PC-9 (cell line): ENCODE measurements at regions of chr15 and their contacts with region 1.

Region 1: GRCh38 chr15:32994810-32995424 is 199.6 kb downstream of the FMN1 start:
- DNase-seq: no peak
- H3K4me3 ChIP-seq: no peak overlapping the region
- H3K27ac ChIP-seq: no peak overlapping the region
- H3K4me1 ChIP-seq: no peaks in the 10 kb centered on the region
- H3K27me3 ChIP-seq: no peaks in the 10 kb centered on the region
- CTCF ChIP-seq: peak; percentile 75

Region 2: GRCh38 chr15:32651229-32651837 is 343.6 kb before region 1 on chr15:
- CTCF ChIA-PET with region 1: interaction called, 3 read pairs
- POLR2A ChIA-PET with region 1: no interaction called
- intact Hi-C with region 1: loop called (anchors 1 kb)
- DNase-seq: peak in 1 of 2 experiments; percentile 68
- H3K4me3 ChIP-seq: no peak overlapping the region
- H3K27ac ChIP-seq: peak overlapping the region; percentile 84
- H3K4me1 ChIP-seq: peaks cover 19% of the 10 kb centered on the region
- H3K27me3 ChIP-seq: no peaks in the 10 kb centered on the region
- CTCF ChIP-seq: peak; percentile 92

Region 3: GRCh38 chr15:32657198-32657883 is 337.6 kb before region 1 on chr15:
- CTCF ChIA-PET with region 1: interaction called, 4 read pairs
- POLR2A ChIA-PET with region 1: no interaction called
- intact Hi-C with region 1: loop called (anchors 1 kb)
- DNase-seq: peak in 1 of 2 experiments; percentile 21
- H3K4me3 ChIP-seq: no peak overlapping the region
- H3K27ac ChIP-seq: no peak overlapping the region
- H3K4me1 ChIP-seq: peaks cover 19% of the 10 kb centered on the region
- H3K27me3 ChIP-seq: no peaks in the 10 kb centered on the region
- CTCF ChIP-seq: no peak

Region 4: GRCh38 chr15:32844118-32844711 is 150.7 kb before region 1 on chr15:
- CTCF ChIA-PET with region 1: interaction called, 6 read pairs
- POLR2A ChIA-PET with region 1: no interaction called
- intact Hi-C with region 1: loop called (anchors 2 kb)
- DNase-seq: no peak
- H3K4me3 ChIP-seq: no peak overlapping the region
- H3K27ac ChIP-seq: no peak overlapping the region
- H3K4me1 ChIP-seq: peaks cover 7% of the 10 kb centered on the region
- H3K27me3 ChIP-seq: no peaks in the 10 kb centered on the region
- CTCF ChIP-seq: peak; percentile 62

Region 5: DNA sequence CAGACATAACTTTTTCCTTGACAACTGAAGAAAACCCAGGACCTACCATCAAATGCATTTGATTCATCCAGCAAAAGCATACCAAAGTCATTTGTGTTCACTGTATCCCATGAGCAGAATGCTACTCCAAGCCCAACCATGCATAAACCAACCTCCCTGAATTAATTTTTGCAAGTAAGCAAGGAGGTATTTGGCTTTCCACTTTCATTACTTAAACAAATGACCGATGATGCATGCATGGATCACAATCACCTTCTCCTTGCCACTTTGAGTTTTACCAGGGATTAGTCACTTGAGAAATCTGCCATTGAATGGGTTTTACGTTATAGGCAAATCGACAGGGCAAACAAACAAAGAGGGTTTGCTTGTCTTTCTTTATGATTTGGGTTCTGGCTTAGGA is 15.2 kb before region 1 on chr15:
- CTCF ChIA-PET with region 1: no interaction called
- POLR2A ChIA-PET with region 1: no interaction called
- intact Hi-C with region 1: no loop called
- DNase-seq: no peak
- H3K4me3 ChIP-seq: no peak overlapping the region
- H3K27ac ChIP-seq: no peak overlapping the region
- H3K4me1 ChIP-seq: no peaks in the 10 kb centered on the region
- H3K27me3 ChIP-seq: no peaks in the 10 kb centered on the region
- CTCF ChIP-seq: no peak